ENCODE measurements at regions of chr19 and their contacts with region 1.

Region 1: DNA sequence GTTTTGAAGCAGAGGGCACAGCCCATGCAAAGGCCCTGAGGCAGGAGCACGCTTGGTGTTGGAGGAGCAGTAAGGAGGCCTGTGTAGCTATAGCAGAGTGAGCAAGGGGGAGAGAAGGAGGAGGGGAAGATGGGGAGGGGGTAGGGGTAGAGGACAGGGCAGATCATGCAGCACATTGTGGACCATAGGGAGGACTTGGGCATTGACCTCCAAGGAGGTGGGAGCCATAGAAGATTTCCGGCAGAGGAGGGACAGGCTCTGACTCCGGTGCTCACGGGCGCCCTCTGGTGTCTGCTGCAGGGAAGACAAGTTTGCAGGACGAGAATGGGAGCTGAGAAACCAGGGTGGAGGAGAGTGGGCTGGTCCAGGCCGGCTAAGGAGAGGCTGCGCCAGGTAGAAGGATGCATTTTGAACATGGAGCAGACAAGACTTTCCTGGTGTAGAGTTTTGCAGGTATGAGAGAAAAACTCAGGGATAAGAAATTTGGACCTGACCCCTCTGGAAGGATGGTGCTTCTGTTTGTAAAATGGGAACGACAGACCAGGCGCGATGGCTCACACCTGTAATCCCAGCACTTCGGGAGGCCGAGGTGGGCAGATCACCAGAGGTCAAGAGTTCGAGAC is 13.7 kb upstream of the CREB3L3 start:
- H3K4me3 ChIP-seq: no peak overlapping the region
- H3K27ac ChIP-seq: no peak overlapping the region
- H3K4me1 ChIP-seq: no peaks in the 10 kb centered on the region
- CTCF ChIP-seq: peak; percentile 63

Region 2: GRCh38 chr19:4083677-4084546 is 55.8 kb before region 1 on chr19:
- CTCF ChIA-PET with region 1: no interaction called
- POLR2A ChIA-PET with region 1: no interaction called
- H3K4me3 ChIP-seq: no peak overlapping the region
- H3K27ac ChIP-seq: no peak overlapping the region
- H3K4me1 ChIP-seq: no peaks in the 10 kb centered on the region; the same call in 1 of the 2 replicates
- CTCF ChIP-seq: no peak

Region 3: GRCh38 chr19:4120531-4120930 is 19.2 kb before region 1 on chr19:
- CTCF ChIA-PET with region 1: interaction called, 21 read pairs
- POLR2A ChIA-PET with region 1: no interaction called
- H3K4me3 ChIP-seq: no peak overlapping the region
- H3K27ac ChIP-seq: no peak overlapping the region; the same call in 1 of the 2 replicates
- H3K4me1 ChIP-seq: peaks cover 6% of the 10 kb centered on the region; the same call in 1 of the 2 replicates
- CTCF ChIP-seq: no peak

Region 4: DNA sequence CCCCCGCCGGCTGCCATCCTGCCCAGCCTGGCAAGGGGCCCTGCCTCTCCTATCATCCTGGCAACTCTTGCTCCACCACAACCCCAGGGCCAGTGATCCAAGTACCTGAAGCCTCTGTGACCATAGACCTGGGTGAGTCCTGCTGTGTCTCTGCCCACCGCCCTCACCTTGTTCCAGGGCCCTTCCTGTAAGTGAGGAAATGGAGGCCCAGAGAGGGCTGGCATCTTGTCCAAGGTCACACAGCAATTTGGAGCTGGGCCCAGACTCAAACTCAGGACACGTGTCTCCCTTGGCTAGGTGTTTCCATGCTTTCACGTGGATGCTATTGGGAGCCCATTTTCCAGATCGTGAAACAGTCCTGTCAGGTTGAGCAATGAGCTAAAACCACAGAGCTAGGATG is 17.4 kb after region 1 on chr19:
- CTCF ChIA-PET with region 1: interaction called, 17 read pairs
- POLR2A ChIA-PET with region 1: no interaction called
- H3K4me3 ChIP-seq: no peak overlapping the region
- H3K27ac ChIP-seq: no peak overlapping the region
- H3K4me1 ChIP-seq: no peaks in the 10 kb centered on the region
- CTCF ChIP-seq: no peak

Region 5: DNA sequence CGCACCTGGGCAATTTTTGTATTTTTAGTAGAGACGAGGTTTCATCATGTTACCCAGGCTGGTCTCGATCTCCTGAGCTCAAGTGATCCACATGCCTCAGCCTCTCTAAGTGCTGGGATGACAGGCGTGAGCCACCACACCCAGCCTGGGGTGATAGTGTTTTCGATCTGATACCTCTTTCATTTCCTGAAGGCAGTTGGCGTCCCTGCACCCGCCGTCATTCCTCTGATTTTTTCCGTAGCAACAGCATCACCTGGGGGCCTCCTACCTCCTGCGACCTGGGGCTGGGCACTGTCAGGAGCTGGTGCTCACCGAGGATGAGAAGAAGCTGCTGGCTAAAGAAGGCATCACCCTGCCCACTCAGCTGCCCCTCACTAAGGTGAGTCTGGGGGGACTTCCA is 24.5 kb after region 1 on chr19:
- CTCF ChIA-PET with region 1: interaction called, 17 read pairs
- POLR2A ChIA-PET with region 1: no interaction called
- H3K4me3 ChIP-seq: no peak overlapping the region
- H3K27ac ChIP-seq: no peak overlapping the region
- H3K4me1 ChIP-seq: no peaks in the 10 kb centered on the region
- CTCF ChIP-seq: no peak

Region 6: GRCh38 chr19:4201798-4202197 is 62.1 kb after region 1 on chr19:
- CTCF ChIA-PET with region 1: interaction called, 20 read pairs
- POLR2A ChIA-PET with region 1: no interaction called
- H3K4me3 ChIP-seq: no peak overlapping the region
- H3K27ac ChIP-seq: no peak overlapping the region
- H3K4me1 ChIP-seq: no peaks in the 10 kb centered on the region
- CTCF ChIP-seq: no peak

Measured in HEK293 (cell line).